Activated CD4-positive, alpha-beta T cell treated with anti-CD3 and anti-CD28 coated beads, Interleukin-2, amount 10 ng/mL, durations not matched to agents 24 days and 14 days (primary cell): ENCODE measurements at regions of chr16 and their contacts with region 1.

Region 1: GRCh38 chr16:4253394-4254150 is 11.7 kb upstream of the SRL start:
- DNase-seq: peak; percentile 100
- H3K4me3 Mint-ChIP-seq: peak overlapping the region; percentile 95
- H3K27ac Mint-ChIP-seq: peak overlapping the region; percentile 100
- H3K4me1 Mint-ChIP-seq: peaks cover 5% of the 10 kb centered on the region
- H3K27me3 Mint-ChIP-seq: no peaks in the 10 kb centered on the region

Region 2: GRCh38 chr16:3938848-3939624 is 314.5 kb before region 1 on chr16:
- intact Hi-C with region 1: loop called (anchors 5 kb)
- DNase-seq: peak; percentile 90
- H3K4me3 Mint-ChIP-seq: peak overlapping the region; percentile 23
- H3K27ac Mint-ChIP-seq: no peak overlapping the region
- H3K4me1 Mint-ChIP-seq: no peaks in the 10 kb centered on the region
- H3K27me3 Mint-ChIP-seq: peaks cover 5% of the 10 kb centered on the region

Region 3: GRCh38 chr16:3983081-3983520 is 270.5 kb before region 1 on chr16:
- intact Hi-C with region 1: loop called (anchors 1 kb)
- DNase-seq: peak; percentile 87
- H3K4me3 Mint-ChIP-seq: peak overlapping the region; percentile 19
- H3K27ac Mint-ChIP-seq: no peak overlapping the region
- H3K4me1 Mint-ChIP-seq: peaks cover 7% of the 10 kb centered on the region
- H3K27me3 Mint-ChIP-seq: no peaks in the 10 kb centered on the region

Region 4: GRCh38 chr16:4116337-4117249 is 137.0 kb before region 1 on chr16 and contains the start of gene ADCY9:
- intact Hi-C with region 1: loop called (anchors 2 kb)
- DNase-seq: peak; percentile 96
- H3K4me3 Mint-ChIP-seq: peak within 1 kb of the TSS; percentile 84
- H3K27ac Mint-ChIP-seq: peak within 1 kb of the TSS; percentile 73
- H3K4me1 Mint-ChIP-seq: peaks cover 36% of the 10 kb centered on the region
- H3K27me3 Mint-ChIP-seq: peaks cover 11% of the 10 kb centered on the region
- total RNA-seq, gene ADCY9: 8.9 and 9.6 TPM in 2 replicates

Region 5: DNA sequence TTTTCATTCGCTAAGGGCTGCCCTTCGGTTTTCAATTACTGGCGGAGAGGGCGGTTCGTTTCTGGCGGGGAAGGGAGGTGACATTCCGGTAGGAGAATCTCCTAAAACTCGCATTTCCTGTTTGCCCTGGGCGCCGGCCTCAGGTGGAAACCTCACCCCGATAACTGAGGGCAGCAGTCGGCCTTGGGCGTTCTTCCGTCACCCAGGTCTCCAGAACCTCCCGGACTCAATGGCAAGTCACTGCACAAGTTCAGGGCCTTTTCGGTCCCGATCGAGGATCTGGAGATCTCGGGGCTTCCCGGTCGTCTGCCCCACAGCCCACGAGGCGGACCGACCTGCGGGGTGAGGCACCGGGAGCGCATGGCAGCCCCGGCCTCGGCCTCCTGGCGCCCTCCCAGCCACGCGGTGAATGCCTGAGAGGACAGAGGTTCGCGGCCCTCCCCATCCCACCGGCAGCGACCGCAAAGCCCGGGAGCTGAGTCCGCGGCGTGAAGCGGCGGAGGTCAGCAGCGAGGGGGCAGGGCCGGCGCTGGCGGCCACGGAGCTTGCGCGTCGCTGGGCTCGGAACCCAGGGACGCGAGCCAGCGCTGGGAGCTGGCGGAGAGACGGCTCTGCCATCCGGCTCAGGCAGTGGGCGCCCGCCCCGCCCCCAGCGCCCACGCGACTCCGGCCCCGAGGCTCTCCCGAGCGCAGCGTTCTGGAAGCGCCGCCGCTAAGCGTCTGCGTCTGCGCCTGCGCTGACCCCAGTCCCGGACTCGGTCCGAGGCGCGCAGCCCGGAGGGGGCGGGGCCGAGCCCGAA is 70.1 kb before region 1 on chr16:
- intact Hi-C with region 1: loop called (anchors 5 kb)
- DNase-seq: peak; percentile 98
- H3K4me3 Mint-ChIP-seq: peak overlapping the region; percentile 83
- H3K27ac Mint-ChIP-seq: peak overlapping the region; percentile 83
- H3K4me1 Mint-ChIP-seq: peaks cover 4% of the 10 kb centered on the region
- H3K27me3 Mint-ChIP-seq: peaks cover 17% of the 10 kb centered on the region

Region 6: DNA sequence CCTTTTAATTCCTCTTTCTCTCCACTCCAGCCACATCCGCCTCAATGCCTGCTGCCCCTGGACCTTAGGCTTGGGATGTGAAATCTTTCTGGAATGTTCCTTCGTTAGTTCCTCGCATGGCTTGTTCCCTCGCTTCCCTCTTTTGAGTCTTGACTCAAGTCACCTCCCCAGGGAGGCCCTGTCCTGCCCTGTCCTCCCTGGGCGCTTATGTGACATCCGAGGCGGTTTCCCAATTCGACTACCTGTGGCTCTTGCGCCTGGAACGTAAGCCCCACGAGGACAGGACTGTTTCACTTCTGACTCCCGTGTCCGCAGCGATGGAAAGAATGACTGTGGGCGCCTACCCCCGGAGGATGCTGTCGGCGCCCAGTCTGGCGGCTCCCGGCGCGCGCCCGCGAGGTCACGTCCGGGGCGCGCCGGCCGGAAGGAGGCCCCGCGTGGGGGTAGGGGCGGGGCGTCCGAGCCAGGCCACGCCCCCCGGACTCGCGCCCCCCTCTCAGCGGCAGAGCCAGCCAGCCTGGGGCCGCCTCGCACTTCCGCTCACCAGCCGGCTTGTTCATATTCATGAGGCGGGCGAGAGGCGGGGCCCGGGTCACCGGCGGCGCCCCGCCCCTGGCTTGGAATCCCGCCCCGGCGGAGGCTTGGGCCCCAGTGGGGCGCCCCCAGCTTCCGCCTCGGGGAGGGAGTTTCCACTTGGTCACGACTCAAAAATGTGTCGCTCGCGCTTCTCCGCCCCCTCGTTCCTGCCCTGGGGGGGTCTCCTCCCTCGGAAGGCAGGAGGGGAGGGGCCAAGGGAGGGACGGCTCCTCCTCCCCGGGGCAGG is 53.9 kb after region 1 on chr16:
- intact Hi-C with region 1: loop called (anchors 1 kb)
- DNase-seq: peak; percentile 99
- H3K4me3 Mint-ChIP-seq: peak overlapping the region; percentile 98
- H3K27ac Mint-ChIP-seq: peak overlapping the region; percentile 98
- H3K4me1 Mint-ChIP-seq: peaks cover 26% of the 10 kb centered on the region
- H3K27me3 Mint-ChIP-seq: peaks cover 2% of the 10 kb centered on the region

Region 7: GRCh38 chr16:4344983-4345835 is 91.6 kb after region 1 on chr16:
- intact Hi-C with region 1: no loop called
- DNase-seq: peak; percentile 58
- H3K4me3 Mint-ChIP-seq: no peak overlapping the region
- H3K27ac Mint-ChIP-seq: no peak overlapping the region
- H3K4me1 Mint-ChIP-seq: peaks cover 4% of the 10 kb centered on the region
- H3K27me3 Mint-ChIP-seq: no peaks in the 10 kb centered on the region